CD4-positive, alpha-beta memory T cell (primary cell): ENCODE measurements at regions of chr10 and their contacts with region 1.

Region 1: DNA sequence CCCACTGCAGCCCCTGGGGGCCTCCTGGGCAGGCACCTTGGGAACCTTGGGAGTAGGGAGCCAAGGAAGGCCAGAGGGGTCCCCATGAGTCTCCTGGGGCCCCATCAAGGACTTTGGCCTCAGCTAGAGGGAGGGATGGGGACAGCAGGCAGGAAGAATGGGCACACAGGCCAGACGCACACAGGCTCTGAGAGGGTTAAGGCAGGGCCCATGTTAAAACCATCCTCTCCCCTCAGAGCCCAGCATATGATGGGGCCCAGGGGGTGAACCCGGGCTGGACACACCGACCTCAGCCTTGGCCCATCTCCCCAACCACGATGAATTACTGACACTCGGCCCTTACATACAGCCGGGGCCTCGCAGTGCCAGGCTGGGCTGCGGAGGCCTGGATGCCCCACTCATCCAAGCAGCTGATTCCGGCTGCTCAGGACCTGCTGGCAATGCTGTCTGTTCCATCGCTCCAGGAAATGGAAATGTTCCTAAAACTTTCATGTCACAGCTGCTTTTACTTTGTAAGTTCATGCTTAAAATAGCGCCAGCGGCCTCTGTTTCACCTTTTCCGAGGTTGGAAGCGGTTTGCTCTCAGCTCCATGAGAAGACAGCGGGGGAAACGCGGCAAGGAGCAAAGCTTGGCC is 17.3 kb upstream of the INPP5A start:
- DNase-seq: no peak
- H3K4me3 ChIP-seq: no peak overlapping the region
- H3K4me3 Mint-ChIP-seq: no peak overlapping the region
- H3K27ac ChIP-seq: no peak overlapping the region
- H3K27ac Mint-ChIP-seq: no peak overlapping the region
- H3K4me1 ChIP-seq: no peaks in the 10 kb centered on the region
- H3K4me1 Mint-ChIP-seq: no peaks in the 10 kb centered on the region
- H3K27me3 ChIP-seq: no peaks in the 10 kb centered on the region
- H3K27me3 Mint-ChIP-seq: peaks cover 2 to 10% of the 10 kb centered on the region in 2 donors

Region 2: GRCh38 chr10:132470410-132471124 is 49.7 kb before region 1 on chr10:
- CTCF ChIA-PET with region 1: no interaction called
- POLR2A ChIA-PET with region 1: no interaction called
- intact Hi-C with region 1: loop called (anchors 10 kb)
- DNase-seq: no peak
- H3K4me3 ChIP-seq: no peak overlapping the region
- H3K4me3 Mint-ChIP-seq: no peak overlapping the region
- H3K27ac ChIP-seq: no peak overlapping the region
- H3K27ac Mint-ChIP-seq: no peak overlapping the region
- H3K4me1 ChIP-seq: no peaks in the 10 kb centered on the region
- H3K4me1 Mint-ChIP-seq: peaks cover 0 to 4% (median under 1%) of the 10 kb centered on the region in 4 donors
- H3K27me3 ChIP-seq: no peaks in the 10 kb centered on the region
- H3K27me3 Mint-ChIP-seq: peaks cover 5 to 13% of the 10 kb centered on the region in 2 donors

Region 3: GRCh38 chr10:132506711-132507408 is 13.4 kb before region 1 on chr10:
- CTCF ChIA-PET with region 1: no interaction called
- POLR2A ChIA-PET with region 1: no interaction called
- intact Hi-C with region 1: no loop called
- DNase-seq: no peak
- H3K4me3 ChIP-seq: no peak overlapping the region
- H3K4me3 Mint-ChIP-seq: no peak overlapping the region
- H3K27ac ChIP-seq: no peak overlapping the region
- H3K27ac Mint-ChIP-seq: no peak overlapping the region
- H3K4me1 ChIP-seq: no peaks in the 10 kb centered on the region
- H3K4me1 Mint-ChIP-seq: no peaks in the 10 kb centered on the region
- H3K27me3 ChIP-seq: no peaks in the 10 kb centered on the region
- H3K27me3 Mint-ChIP-seq: no peaks in the 10 kb centered on the region